ENCODE measurements at regions of chr3 and their contacts with region 1.

Region 1: DNA sequence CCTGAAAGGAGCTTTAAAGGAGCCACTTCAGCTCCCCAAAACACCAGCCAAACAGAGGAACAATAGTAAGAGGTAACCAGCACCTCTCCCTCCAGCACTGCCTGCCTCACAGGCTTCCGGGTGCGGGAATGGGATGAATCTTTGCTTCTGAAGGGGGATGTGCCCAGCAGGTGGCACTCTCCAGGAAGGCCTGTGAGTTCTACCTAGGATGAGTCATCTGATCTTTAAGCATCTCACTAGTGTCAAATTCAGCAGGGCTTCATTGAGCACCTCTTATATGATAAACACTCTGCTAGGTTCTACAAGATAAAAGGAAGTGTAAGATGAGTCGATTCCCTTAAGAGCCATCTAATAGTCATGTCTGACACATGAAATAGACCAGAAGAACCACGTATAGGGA is 237.4 kb upstream of the UMPS start:
- DNase-seq: no peak
- ATAC-seq: no peak
- H3K4me3 ChIP-seq: no peak overlapping the region
- H3K4me3 Mint-ChIP-seq: no peak overlapping the region
- H3K27ac ChIP-seq: no peak overlapping the region
- H3K27ac Mint-ChIP-seq: no peak overlapping the region
- H3K4me1 ChIP-seq: no peaks in the 10 kb centered on the region
- H3K4me1 Mint-ChIP-seq: peaks cover 0 to 11% (median 0%) of the 10 kb centered on the region in 7 donors
- H3K27me3 ChIP-seq: no peaks in the 10 kb centered on the region
- H3K27me3 Mint-ChIP-seq: peaks cover 9 to 25% (median 13%) of the 10 kb centered on the region in 5 donors

Region 2: GRCh38 chr3:124552239-124552638 is 59.4 kb after region 1 on chr3:
- CTCF ChIA-PET with region 1: no interaction called
- POLR2A ChIA-PET with region 1: no interaction called
- intact Hi-C with region 1: loop called in 1 of 2 experiments (anchors 2 kb)
- DNase-seq: no peak
- ATAC-seq: no peak
- H3K4me3 ChIP-seq: no peak overlapping the region
- H3K4me3 Mint-ChIP-seq: no peak overlapping the region
- H3K27ac ChIP-seq: no peak overlapping the region
- H3K27ac Mint-ChIP-seq: no peak overlapping the region
- H3K4me1 ChIP-seq: peaks cover 0 to 4% of the 10 kb centered on the region in 2 donors
- H3K4me1 Mint-ChIP-seq: peaks cover 0 to 9% (median 2%) of the 10 kb centered on the region in 7 donors
- H3K27me3 ChIP-seq: no peaks in the 10 kb centered on the region
- H3K27me3 Mint-ChIP-seq: peaks cover 45 to 76% (median 56%) of the 10 kb centered on the region in 5 donors

Measured in naive thymus-derived CD4-positive, alpha-beta T cell (primary cell).